Common myeloid progenitor, CD34-positive (primary cell): ENCODE measurements at regions of chr11 and their contacts with region 1.

Region 1: DNA sequence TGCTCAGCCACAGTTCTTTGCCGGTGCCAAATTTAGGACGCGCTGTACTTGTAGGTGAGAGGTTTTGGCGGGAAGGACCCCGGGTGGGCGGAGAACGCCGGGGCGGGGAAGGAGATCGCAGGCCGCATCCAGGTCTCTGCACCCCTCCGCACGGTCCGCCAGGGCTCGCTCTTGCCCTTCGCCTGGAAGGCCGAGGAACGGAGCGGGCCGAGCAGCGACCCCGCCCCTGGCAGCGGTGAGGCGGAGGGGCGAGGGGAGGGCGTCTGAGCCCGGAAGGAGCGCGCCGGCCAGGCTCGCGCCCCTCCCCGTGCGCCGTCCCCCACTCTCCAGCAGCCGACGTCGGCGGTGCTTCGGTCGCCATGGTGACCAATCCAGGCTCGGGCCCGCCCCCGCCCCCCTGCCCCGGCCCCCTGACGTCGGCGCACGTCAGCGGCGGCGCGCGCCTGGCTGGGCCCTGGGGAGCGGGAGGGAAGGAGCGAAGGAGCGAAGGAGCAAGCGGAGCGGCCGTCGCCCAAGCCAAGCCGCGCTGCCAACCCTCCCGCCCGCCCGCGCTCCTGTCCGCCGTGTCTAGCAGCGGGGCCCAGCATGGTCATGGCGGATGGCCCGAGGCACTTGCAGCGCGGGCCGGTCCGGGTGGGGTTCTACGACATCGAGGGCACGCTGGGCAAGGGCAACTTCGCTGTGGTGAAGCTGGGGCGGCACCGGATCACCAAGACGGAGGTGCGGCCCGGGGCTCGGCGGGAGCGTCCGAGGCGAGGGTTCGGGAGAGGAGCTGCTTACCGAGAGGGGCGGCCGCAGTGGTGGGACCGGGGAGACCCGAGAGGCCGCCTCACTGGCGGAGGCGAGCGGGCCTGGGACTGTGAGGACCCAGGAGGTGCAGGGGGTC is at the start of gene SIK2:
- DNase-seq: peak; percentile 96 to 98 (median 98)
- H3K4me3 ChIP-seq: peak within 1 kb of the TSS; percentile 72 to 97 (median 87)
- H3K27ac ChIP-seq: peak within 1 kb of the TSS; percentile 72 to 86
- H3K4me1 ChIP-seq: peaks cover 12 to 22% (median 20%) of the 10 kb centered on the region in 4 experiments
- H3K27me3 ChIP-seq: no peaks in the 10 kb centered on the region

Region 2: DNA sequence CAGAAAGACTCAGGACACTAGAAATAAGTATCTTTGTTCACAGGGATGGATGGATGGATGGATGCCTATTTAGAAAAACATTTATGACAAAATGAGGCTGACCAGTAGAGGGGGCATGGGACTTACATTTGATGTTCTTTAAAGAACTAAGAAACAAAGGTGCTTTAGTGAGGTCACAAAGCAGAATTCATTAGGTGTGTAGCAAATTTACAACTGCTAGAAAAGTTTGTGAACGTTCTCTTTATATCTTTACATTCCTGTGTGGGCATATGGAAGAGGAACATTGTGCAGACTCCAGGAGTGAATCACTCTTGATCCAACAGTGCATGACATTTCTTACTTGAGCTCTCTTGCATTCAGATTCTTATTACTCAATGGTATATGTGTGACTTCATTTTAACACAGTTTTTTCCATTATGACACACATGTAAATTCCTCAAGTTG is 15.8 kb before region 1 on chr11:
- CTCF ChIA-PET with region 1: interaction called, 12 read pairs
- POLR2A ChIA-PET with region 1: no interaction called
- DNase-seq: peak; percentile 63 to 82 (median 74)
- H3K4me3 ChIP-seq: no peak overlapping the region
- H3K27ac ChIP-seq: no peak overlapping the region
- H3K4me1 ChIP-seq: peaks cover 17 to 35% (median 23%) of the 10 kb centered on the region in 4 experiments
- H3K27me3 ChIP-seq: no peaks in the 10 kb centered on the region

Region 3: GRCh38 chr11:112024773-112025678 is 422.8 kb after region 1 on chr11 and contains the start of gene DLAT:
- CTCF ChIA-PET with region 1: no interaction called
- POLR2A ChIA-PET with region 1: no interaction called
- DNase-seq: peak; percentile 90 to 94 (median 92)
- H3K4me3 ChIP-seq: peak within 1 kb of the TSS; percentile 84 to 99 (median 95)
- H3K27ac ChIP-seq: peak within 1 kb of the TSS; percentile 40 to 86
- H3K4me1 ChIP-seq: peaks cover 4 to 22% (median 16%) of the 10 kb centered on the region in 4 experiments
- H3K27me3 ChIP-seq: no peaks in the 10 kb centered on the region